ENCODE measurements at regions of chr9 and their contacts with region 1.

Region 1: DNA sequence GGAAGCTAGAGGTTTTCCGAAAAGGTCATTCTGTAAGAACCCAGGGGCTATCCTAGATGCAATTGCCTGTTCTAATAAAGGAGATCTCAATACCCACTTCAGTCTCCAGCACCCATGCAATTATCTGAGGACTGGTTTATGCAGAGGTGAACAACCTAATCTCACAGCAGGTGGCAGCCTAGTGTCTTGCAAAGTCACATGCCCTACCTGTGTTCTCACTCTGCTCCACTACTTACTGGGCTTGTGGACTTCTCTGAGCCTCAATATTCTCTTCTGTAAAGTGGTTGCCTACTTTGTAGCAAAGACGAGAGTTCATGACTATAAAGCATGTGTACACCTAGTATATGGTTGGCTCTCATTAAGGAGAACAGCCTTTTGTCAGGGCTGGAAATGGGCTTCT is 21.0 kb upstream of the ALDH1B1 start:
- DNase-seq: peak; percentile 27
- H3K4me3 Mint-ChIP-seq: no peak overlapping the region
- H3K27ac Mint-ChIP-seq: no peak overlapping the region
- H3K4me1 Mint-ChIP-seq: no peaks in the 10 kb centered on the region
- H3K27me3 Mint-ChIP-seq: peaks cover 4% of the 10 kb centered on the region

Region 2: GRCh38 chr9:38405785-38406184 is 34.3 kb after region 1 on chr9:
- CTCF ChIA-PET with region 1: no interaction called
- POLR2A ChIA-PET with region 1: no interaction called
- intact Hi-C with region 1: loop called (anchors 1 kb)
- DNase-seq: no peak
- H3K4me3 Mint-ChIP-seq: no peak overlapping the region
- H3K27ac Mint-ChIP-seq: no peak overlapping the region
- H3K4me1 Mint-ChIP-seq: peaks cover 2% of the 10 kb centered on the region
- H3K27me3 Mint-ChIP-seq: peaks cover 14% of the 10 kb centered on the region

Region 3: DNA sequence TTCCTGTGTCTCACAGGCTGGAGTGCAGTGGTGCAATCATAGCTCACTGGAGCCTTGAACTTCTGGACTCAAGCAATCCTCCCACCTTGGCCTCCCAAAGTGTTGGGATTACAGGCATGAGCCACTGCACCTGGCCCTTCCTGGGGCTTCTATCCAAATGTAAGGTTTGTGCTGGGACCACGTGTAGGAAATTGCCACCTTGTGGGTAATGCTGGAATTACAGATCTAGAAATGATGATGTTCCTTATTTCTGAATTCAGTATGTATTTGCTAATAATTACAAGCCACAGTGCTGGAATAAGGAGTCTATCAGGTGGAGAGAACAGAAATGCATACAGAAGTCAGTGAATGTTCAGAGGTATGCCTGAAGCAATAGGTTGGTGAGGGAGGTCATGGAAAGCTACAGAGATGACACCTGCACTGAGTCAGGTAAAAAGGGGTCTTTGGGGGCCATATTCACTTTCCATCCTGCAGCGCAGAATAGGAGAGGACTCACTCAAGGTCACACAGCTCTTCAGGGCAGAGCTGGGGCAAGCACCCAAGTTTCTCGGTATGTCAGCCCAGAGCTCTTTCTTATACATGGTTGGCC is 61.5 kb after region 1 on chr9:
- CTCF ChIA-PET with region 1: no interaction called
- POLR2A ChIA-PET with region 1: no interaction called
- intact Hi-C with region 1: loop called (anchors 2 kb)
- DNase-seq: no peak
- H3K4me3 Mint-ChIP-seq: no peak overlapping the region
- H3K27ac Mint-ChIP-seq: no peak overlapping the region
- H3K4me1 Mint-ChIP-seq: no peaks in the 10 kb centered on the region
- H3K27me3 Mint-ChIP-seq: no peaks in the 10 kb centered on the region

Measured in activated CD4-positive, alpha-beta memory T cell treated with anti-CD3 and anti-CD28 coated beads for 36 hours (primary cell).